AG04449 (cell line): ENCODE measurements at regions of chr9 and their contacts with region 1.

Region 1: GRCh38 chr9:132507746-132508469 is 74.5 kb upstream of the BARHL1 start:
- DNase-seq: no peak
- H3K4me3 ChIP-seq: no peak overlapping the region
- CTCF ChIP-seq: peak; percentile 83

Region 2: GRCh38 chr9:132439153-132439552 is 68.8 kb before region 1 on chr9:
- CTCF ChIA-PET with region 1: no interaction called
- POLR2A ChIA-PET with region 1: no interaction called
- DNase-seq: no peak
- H3K4me3 ChIP-seq: no peak overlapping the region
- CTCF ChIP-seq: no peak

Region 3: DNA sequence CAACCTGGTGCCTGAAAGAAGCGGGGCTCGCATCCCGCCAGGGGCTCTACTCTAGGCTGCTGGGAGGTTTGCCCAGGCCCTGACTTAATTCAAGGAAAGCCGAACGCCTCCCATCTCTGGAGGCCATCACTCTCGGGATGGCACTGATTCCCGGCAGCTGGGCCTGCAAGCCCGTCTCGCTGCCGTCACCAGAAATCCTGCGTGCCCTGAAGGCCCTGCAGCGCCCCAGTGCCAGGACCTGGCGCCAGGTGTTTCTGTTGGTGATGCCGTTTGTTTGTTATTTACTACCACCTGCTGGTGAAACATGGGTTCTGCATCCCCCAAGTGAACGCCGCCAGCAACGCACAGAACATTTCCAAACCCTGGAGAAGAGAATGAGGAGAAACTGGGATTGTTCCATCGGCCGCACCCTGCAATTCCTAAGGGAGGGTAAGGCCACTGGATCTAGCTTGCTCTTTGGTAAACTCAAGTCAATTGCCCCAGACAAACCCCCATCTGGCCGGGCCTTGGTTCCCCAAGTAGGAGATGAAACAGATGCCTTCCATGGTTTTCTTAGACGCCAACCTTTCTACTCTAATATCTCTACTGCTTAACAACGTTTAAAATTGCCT is 292.2 kb after region 1 on chr9:
- CTCF ChIA-PET with region 1: interaction called, 40 read pairs
- POLR2A ChIA-PET with region 1: no interaction called
- DNase-seq: peak; percentile 3
- H3K4me3 ChIP-seq: no peak overlapping the region
- CTCF ChIP-seq: peak; percentile 73